Ascending aorta (tissue), 2 donors: ENCODE measurements at regions of chr16 and their contacts with region 1.

Region 1: GRCh38 chr16:28863929-28864793 is 518 bp downstream of the SH2B1 start:
- DNase-seq: no peak
- H3K4me3 ChIP-seq: peak overlapping the region; percentile 81 to 98
- H3K27ac ChIP-seq: peak overlapping the region; percentile 89 to 93
- H3K4me1 ChIP-seq: peaks cover 0 to 15% of the 10 kb centered on the region in 2 donors
- H3K27me3 ChIP-seq: no peaks in the 10 kb centered on the region
- CTCF ChIP-seq: no peak

Region 2: DNA sequence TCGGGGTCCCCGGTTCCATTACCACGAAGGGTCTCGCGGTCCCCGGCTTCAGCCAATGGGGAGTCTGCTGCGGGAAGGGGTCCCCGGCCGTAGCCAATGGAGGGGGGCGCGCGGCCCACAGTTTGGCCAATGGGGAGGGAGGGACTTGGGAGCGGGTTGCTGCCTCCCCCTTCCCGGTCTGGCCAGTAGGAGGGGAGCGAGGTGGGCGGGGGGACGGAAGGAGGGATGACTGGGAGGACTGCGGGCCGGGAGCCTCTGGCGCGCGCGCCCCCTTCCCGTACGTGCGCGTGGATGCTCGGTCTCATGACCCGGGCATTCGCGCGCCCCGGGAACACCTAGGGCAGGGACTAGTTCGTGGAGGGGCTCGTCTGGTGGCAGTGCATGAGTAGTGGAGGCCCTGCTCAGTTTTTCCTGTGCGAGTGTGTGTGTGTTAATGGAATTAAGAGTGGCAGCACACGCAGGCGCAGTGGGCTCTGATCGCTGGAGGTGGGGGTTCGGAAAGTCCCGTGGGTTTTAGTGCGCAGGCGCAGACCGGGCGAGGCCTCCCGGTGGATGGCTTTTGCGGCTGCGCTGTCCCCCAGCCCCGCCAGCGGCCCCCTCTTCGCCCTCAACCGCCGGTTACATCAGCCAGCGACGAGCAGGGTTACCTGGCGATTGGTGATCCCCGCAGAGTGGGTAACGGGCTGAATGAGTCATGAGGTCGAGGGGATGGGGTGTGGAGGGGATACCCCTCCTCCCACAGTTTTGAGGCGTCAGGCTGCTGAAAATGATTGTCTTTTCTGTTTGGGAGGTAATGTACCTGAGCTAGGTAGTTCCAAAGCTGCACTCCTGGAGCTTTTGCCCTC is 40.1 kb before region 1 on chr16:
- intact Hi-C with region 1: loop called (anchors 1 kb)
- DNase-seq: peak; percentile 88 to 98
- H3K4me3 ChIP-seq: peak overlapping the region; percentile 98 to 100
- H3K27ac ChIP-seq: peak overlapping the region; percentile 99 to 100
- H3K4me1 ChIP-seq: peaks cover 0 to 20% of the 10 kb centered on the region in 2 donors
- H3K27me3 ChIP-seq: no peaks in the 10 kb centered on the region
- CTCF ChIP-seq: peak in 1 of 3 experiments; percentile 18